Cardiac septum (tissue), 1 donor: ENCODE measurements at regions of chr12 and their contacts with region 1.

Region 1: GRCh38 chr12:110109037-110109836 is 14.9 kb upstream of the IFT81 start:
- DNase-seq: peak; percentile 81

Region 2: GRCh38 chr12:110165540-110166159 is 56.4 kb after region 1 on chr12:
- intact Hi-C with region 1: no loop called
- DNase-seq: no peak

Region 3: GRCh38 chr12:110180591-110181005 is 71.4 kb after region 1 on chr12:
- intact Hi-C with region 1: loop called (anchors 5 kb)
- DNase-seq: no peak